ENCODE measurements at regions of chr7 and their contacts with region 1.

Region 1: DNA sequence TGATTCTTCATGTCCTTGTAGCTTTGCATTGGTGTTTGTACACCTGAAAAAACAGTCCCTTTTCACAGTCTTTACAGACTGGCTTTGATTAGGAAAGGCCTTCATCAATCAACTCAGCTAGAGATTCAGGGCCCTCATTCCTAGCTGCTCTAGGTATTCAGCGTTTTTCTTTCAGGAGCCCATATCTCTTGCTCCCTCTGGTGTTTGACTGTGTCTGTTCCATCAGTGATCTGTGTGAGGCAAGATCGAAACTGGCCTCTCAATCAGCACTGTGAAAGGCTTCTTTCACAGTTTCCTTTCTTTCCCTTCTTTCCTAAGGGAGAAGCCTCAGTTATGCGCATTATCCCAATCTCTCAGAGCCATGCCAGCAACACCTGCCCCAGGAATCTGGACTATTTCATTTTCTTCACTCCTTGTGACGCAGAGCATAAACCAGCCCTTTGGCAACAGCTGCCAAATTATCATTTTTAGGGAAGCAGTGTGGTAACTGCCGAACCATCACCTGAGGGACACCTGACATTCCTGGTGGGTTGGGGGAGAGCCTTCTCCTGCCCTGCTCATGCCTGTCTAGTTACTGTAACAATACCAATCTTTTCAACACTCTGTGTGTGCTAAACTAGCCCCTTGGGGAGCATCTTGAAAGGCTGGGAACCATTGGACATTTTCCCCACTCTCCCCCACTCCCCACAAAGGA is 75.7 kb upstream of the CCDC71L start:
- DNase-seq: peak in 2 of 5 donors; percentile 20 to 21
- ATAC-seq: peak; percentile 37 to 81 (median 74)
- H3K4me3 ChIP-seq: peak overlapping the region in 1 of 12 donors; percentile 2
- H3K27ac ChIP-seq: no peak overlapping the region
- H3K4me1 ChIP-seq: peaks cover 0 to 23% (median 2%) of the 10 kb centered on the region in 12 donors
- H3K27me3 ChIP-seq: no peaks in the 10 kb centered on the region
- CTCF ChIP-seq: peak; percentile 40 to 73 (median 60)
- POLR2A ChIP-seq: no peak

Region 2: GRCh38 chr7:106461993-106462859 is 274.4 kb before region 1 on chr7:
- intact Hi-C with region 1: loop called in 2 of 10 experiments (anchors 5 to 10 kb)
- DNase-seq: no peak
- ATAC-seq: peak in 2 of 4 donors; percentile 52 to 63
- H3K4me3 ChIP-seq: no peak overlapping the region
- H3K27ac ChIP-seq: no peak overlapping the region
- H3K4me1 ChIP-seq: peaks cover 0 to 17% (median 3%) of the 10 kb centered on the region in 12 donors
- H3K27me3 ChIP-seq: no peaks in the 10 kb centered on the region
- CTCF ChIP-seq: peak; percentile 44 to 72 (median 64)
- POLR2A ChIP-seq: no peak

Region 3: GRCh38 chr7:106542550-106543220 is 194.0 kb before region 1 on chr7:
- intact Hi-C with region 1: loop called in 9 of 10 experiments (anchors 2 to 5 kb)
- DNase-seq: peak in 3 of 5 donors; percentile 28 to 45 (median 32)
- ATAC-seq: peak; percentile 42 to 83 (median 79)
- H3K4me3 ChIP-seq: no peak overlapping the region
- H3K27ac ChIP-seq: peak overlapping the region in 4 of 12 donors; percentile 2 to 58 (median 26)
- H3K4me1 ChIP-seq: peaks cover 0 to 15% (median 0%) of the 10 kb centered on the region in 12 donors
- H3K27me3 ChIP-seq: no peaks in the 10 kb centered on the region
- CTCF ChIP-seq: peak; percentile 32 to 70 (median 57)
- POLR2A ChIP-seq: no peak

Region 4: GRCh38 chr7:106623853-106624252 is 112.8 kb before region 1 on chr7:
- intact Hi-C with region 1: no loop called
- DNase-seq: no peak
- ATAC-seq: no peak
- H3K4me3 ChIP-seq: no peak overlapping the region
- H3K27ac ChIP-seq: no peak overlapping the region
- H3K4me1 ChIP-seq: peaks cover 0 to 12% (median 0%) of the 10 kb centered on the region in 12 donors
- H3K27me3 ChIP-seq: no peaks in the 10 kb centered on the region
- CTCF ChIP-seq: no peak
- POLR2A ChIP-seq: no peak

Region 5: GRCh38 chr7:106715730-106716129 is 20.9 kb before region 1 on chr7:
- intact Hi-C with region 1: no loop called
- DNase-seq: no peak
- ATAC-seq: no peak
- H3K4me3 ChIP-seq: no peak overlapping the region
- H3K27ac ChIP-seq: no peak overlapping the region
- H3K4me1 ChIP-seq: peaks cover 0 to 38% (median 5%) of the 10 kb centered on the region in 12 donors
- H3K27me3 ChIP-seq: no peaks in the 10 kb centered on the region
- CTCF ChIP-seq: no peak
- POLR2A ChIP-seq: no peak

Region 6: GRCh38 chr7:106806556-106806955 is 69.9 kb after region 1 on chr7:
- intact Hi-C with region 1: no loop called
- DNase-seq: no peak
- ATAC-seq: no peak
- H3K4me3 ChIP-seq: no peak overlapping the region
- H3K27ac ChIP-seq: no peak overlapping the region
- H3K4me1 ChIP-seq: peaks cover 0 to under 1% (median 0%) of the 10 kb centered on the region in 12 donors
- H3K27me3 ChIP-seq: no peaks in the 10 kb centered on the region
- CTCF ChIP-seq: no peak
- POLR2A ChIP-seq: no peak

Region 7: GRCh38 chr7:106944035-106944665 is 207.5 kb after region 1 on chr7:
- intact Hi-C with region 1: no loop called
- DNase-seq: no peak
- ATAC-seq: no peak
- H3K4me3 ChIP-seq: no peak overlapping the region
- H3K27ac ChIP-seq: no peak overlapping the region
- H3K4me1 ChIP-seq: no peaks in the 10 kb centered on the region
- H3K27me3 ChIP-seq: no peaks in the 10 kb centered on the region
- CTCF ChIP-seq: no peak
- POLR2A ChIP-seq: no peak